ENCODE measurements at regions of chr1 and their contacts with region 1.

Region 1: DNA sequence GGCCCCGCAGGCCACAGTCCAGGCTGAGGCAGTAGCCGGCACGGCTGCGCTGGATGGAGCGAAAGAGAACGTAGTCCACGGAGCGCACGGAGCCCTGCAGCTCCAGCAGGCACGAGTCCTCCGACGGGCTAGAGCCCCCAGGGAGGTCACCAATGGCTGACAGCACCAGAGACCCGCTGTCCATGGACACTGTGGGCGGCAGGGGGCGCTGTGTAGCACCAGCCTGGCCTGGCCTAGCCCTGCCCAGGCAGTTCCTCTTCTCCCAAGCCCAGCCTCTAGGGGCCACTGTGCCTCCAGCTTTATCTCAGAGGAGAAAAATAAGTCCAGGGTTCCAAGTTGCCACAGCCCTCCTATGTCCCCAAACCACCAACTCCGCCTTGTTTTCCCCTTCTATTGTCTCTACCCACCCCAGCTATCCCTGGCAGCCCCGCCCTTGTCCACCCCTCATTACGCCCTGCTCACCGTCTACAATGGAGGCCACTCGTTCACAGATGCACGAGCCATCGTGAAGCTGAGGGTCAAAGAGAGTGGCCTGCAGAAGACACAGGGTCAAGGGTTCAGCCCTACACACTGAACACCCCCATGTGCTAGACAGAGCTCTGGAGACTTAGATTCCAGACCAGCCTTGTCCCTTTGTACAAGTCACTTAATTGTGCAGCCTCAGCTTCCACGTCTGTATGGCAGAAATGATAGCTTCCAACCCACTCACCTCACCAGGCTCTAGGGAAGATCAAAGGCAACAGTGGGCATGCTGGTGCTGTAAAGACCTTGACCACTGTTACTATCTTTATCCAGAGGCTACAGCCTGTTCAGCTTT is 4.4 kb downstream of the ENTREP3 start:
- DNase-seq: peak; percentile 98
- H3K4me3 ChIP-seq: peak overlapping the region in 1 of 2 experiments; percentile 52; a peak in 1 of 4 replicates
- H3K27ac ChIP-seq: peak overlapping the region; percentile 7 to 41; a peak in 2 of 4 replicates
- H3K4me1 ChIP-seq: peaks cover 0 to 17% of the 10 kb centered on the region in 2 experiments; a peak in 1 of 4 replicates
- H3K27me3 ChIP-seq: no peaks in the 10 kb centered on the region
- CTCF ChIP-seq: peak; percentile 99
- EP300 ChIP-seq: no peak
- RAD21 ChIP-seq: peak; percentile 90

Region 2: GRCh38 chr1:155127105-155127964 is 123.5 kb before region 1 on chr1 and contains the start of gene EFNA1:
- CTCF ChIA-PET with region 1: no interaction called
- POLR2A ChIA-PET with region 1: no interaction called
- DNase-seq: peak; percentile 84
- H3K4me3 ChIP-seq: peak within 1 kb of the TSS; percentile 63 to 67
- H3K27ac ChIP-seq: peak within 1 kb of the TSS in 1 of 2 experiments; percentile 77; a peak in 2 of 4 replicates
- H3K4me1 ChIP-seq: peaks cover 19 to 45% of the 10 kb centered on the region in 2 experiments
- H3K27me3 ChIP-seq: no peaks in the 10 kb centered on the region
- CTCF ChIP-seq: no peak
- EP300 ChIP-seq: no peak
- RAD21 ChIP-seq: no peak
- polyA plus RNA-seq, gene EFNA1: 14.4 and 15.3 TPM in 2 replicates

Region 3: DNA sequence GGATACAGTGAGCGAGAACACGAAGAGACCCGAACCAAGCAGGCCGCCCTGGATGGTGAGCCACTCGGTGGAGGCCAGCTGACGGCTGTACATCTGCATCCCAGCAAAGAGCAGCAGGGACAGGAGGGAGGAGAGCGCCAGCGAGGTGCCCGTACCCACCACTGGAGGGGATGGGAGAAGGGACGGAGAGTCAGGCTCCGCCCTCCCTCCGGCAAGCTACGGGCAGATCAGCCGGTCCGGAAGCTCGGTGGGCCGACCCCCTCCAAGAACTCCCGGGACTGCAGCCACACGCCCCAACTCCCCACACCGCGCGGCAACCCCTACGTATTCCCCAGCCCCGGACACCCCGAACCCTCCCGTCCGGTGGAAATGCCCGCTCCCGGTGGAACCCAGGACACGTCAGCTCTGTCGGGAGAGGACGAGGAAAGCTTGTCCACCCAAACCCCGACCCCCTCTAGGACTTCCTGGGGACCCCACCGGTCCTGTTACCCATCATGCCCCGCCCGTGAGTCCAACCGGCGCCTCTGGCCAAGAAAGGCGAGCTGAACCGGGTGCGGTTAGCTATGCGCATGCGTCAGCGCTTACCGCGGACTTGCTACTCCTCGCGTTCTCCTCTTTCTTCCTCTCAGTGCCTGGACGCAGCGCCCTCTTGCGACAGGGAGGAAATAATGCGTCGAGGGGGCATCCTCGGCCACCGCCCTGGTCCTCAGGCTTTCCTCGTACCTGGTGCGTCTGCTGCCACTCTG is 77.9 kb before region 1 on chr1 and contains the start of gene KRTCAP2:
- CTCF ChIA-PET with region 1: interaction called, 26 read pairs
- POLR2A ChIA-PET with region 1: no interaction called
- DNase-seq: peak; percentile 94
- H3K4me3 ChIP-seq: peak within 1 kb of the TSS; percentile 75 to 93
- H3K27ac ChIP-seq: peak within 1 kb of the TSS; percentile 92
- H3K4me1 ChIP-seq: peaks cover 0 to 33% of the 10 kb centered on the region in 2 experiments; a peak in 3 of 4 replicates
- H3K27me3 ChIP-seq: no peaks in the 10 kb centered on the region
- CTCF ChIP-seq: peak; percentile 91
- EP300 ChIP-seq: no peak
- RAD21 ChIP-seq: no peak
- polyA plus RNA-seq, gene KRTCAP2: 203 and 238 TPM in 2 replicates

Region 4: DNA sequence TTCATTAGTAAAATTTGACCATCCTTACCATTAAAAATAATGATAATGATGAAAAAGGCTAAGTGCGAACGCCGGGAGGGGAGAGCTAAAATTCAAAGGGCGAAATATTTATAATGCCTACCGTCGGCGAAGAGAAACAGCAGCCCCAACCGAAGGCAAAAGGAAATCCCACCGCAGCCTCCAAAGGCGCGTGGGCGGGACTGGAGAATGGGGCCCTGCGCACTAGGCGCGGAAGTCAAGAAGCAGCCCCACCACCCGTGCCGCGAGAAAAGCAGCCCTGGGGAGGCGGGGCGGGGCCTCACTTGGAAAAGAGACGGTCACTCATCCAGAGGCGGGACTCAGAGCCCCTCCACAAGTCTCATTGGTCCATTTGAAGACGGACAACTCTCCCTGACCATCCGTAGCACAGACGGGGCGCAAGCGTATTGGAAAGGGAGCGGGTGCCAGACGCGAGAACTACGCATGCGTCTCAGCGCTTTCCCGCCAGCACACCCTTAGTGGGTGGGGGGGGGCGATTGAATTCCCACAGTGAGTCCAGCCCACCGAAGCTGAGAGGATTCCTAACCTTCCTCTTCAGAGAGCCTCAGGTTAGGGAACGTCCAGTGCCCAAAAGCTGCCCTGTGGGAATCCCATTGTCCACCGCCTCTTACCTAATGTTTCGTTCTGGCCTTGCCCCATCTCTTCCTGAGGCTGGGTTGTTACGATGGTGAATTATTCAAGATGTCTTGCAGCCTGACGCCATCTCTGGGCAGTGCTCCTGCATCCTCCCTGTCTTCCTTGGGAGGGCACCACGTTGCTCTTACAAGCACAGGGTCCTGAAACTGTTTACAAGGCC is 23.4 kb before region 1 on chr1:
- CTCF ChIA-PET with region 1: interaction called, 16 read pairs
- POLR2A ChIA-PET with region 1: interaction called, 5 read pairs
- DNase-seq: peak; percentile 97
- H3K4me3 ChIP-seq: peak overlapping the region; percentile 60 to 69
- H3K27ac ChIP-seq: peak overlapping the region; percentile 86 to 93
- H3K4me1 ChIP-seq: peaks cover 12 to 14% of the 10 kb centered on the region in 2 experiments; a peak in 3 of 4 replicates
- H3K27me3 ChIP-seq: no peaks in the 10 kb centered on the region
- CTCF ChIP-seq: no peak
- EP300 ChIP-seq: no peak
- RAD21 ChIP-seq: no peak

Region 5: DNA sequence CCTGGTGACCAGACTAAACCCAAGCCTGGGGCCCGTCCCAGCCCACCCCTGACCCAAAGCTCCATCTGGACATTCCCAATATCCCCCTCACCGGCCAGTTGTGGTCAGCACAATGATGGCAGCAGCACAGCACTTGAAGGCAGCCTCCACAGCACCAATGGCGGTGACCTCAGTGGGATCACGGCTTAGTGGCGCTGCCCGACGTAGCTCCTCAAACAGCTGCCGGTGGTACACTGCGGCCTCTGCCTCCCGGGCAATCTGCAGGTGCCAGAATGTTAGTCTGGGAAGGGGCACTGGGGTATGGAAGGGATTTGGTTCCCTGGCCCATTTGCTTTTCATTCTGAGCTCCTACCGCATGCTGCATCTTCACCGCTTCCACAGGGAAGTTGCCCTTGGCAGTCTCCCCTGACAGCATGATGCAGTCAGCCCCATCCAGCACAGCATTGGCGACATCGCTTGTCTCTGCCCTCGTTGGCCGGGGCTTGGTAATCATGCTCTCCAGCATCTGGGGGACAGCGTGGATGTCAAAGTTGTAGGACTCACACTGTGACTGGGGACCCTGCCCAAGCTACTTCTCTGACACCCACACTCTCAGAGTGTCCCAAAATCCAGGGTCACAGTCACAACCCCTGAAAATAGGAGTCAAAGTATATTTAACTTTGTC is 42.4 kb after region 1 on chr1:
- CTCF ChIA-PET with region 1: interaction called, 10 read pairs
- POLR2A ChIA-PET with region 1: no interaction called
- DNase-seq: no peak
- H3K4me3 ChIP-seq: no peak overlapping the region
- H3K27ac ChIP-seq: no peak overlapping the region
- H3K4me1 ChIP-seq: no peaks in the 10 kb centered on the region
- H3K27me3 ChIP-seq: no peaks in the 10 kb centered on the region
- CTCF ChIP-seq: no peak
- EP300 ChIP-seq: no peak
- RAD21 ChIP-seq: no peak

Region 6: DNA sequence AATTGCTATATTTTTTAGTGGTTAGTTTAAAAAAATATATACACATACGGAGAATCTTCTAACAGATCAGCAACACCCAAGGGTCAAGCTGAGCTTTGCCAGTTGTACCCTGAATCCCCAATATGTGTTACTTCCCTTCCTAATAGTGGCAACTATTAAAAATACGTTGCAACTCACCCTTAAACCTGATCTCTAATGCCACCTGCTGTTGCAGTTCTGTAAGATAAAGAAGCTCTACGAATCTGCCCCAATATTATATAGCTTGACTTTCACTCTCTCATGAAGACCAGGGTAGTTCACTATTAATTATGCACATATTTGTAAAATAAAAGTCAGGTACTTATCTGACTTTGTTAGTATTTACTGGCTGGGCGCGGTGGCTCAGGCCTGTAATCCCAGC is 253.4 kb after region 1 on chr1:
- CTCF ChIA-PET with region 1: interaction called, 31 read pairs
- POLR2A ChIA-PET with region 1: no interaction called
- DNase-seq: peak; percentile 50
- H3K4me3 ChIP-seq: no peak overlapping the region
- H3K27ac ChIP-seq: no peak overlapping the region
- H3K4me1 ChIP-seq: peaks cover 5 to 8% of the 10 kb centered on the region in 2 experiments; a peak in 3 of 4 replicates
- H3K27me3 ChIP-seq: no peaks in the 10 kb centered on the region
- CTCF ChIP-seq: peak; percentile 61
- EP300 ChIP-seq: no peak
- RAD21 ChIP-seq: peak; percentile 87

Region 7: GRCh38 chr1:155729031-155729898 is 478.4 kb after region 1 on chr1:
- CTCF ChIA-PET with region 1: interaction called, 16 read pairs
- POLR2A ChIA-PET with region 1: no interaction called
- DNase-seq: peak; percentile 55
- H3K4me3 ChIP-seq: no peak overlapping the region
- H3K27ac ChIP-seq: peak overlapping the region; percentile 31 to 38; a peak in 3 of 4 replicates
- H3K4me1 ChIP-seq: no peaks in the 10 kb centered on the region
- H3K27me3 ChIP-seq: no peaks in the 10 kb centered on the region
- CTCF ChIP-seq: peak; percentile 73
- EP300 ChIP-seq: no peak
- RAD21 ChIP-seq: peak; percentile 79